Activated naive CD4-positive, alpha-beta T cell treated with anti-CD3 and anti-CD28 coated beads for 36 hours (primary cell): ENCODE measurements at regions of chr1 and their contacts with region 1.

Region 1: GRCh38 chr1:32072622-32073298 is at the start of gene TMEM39B:
- DNase-seq: peak; percentile 95
- H3K4me3 Mint-ChIP-seq: peak within 1 kb of the TSS; percentile 87
- H3K27ac Mint-ChIP-seq: peak within 1 kb of the TSS; percentile 85
- H3K4me1 Mint-ChIP-seq: peaks cover 32% of the 10 kb centered on the region
- H3K27me3 Mint-ChIP-seq: no peaks in the 10 kb centered on the region
- total RNA-seq, gene TMEM39B: 17.2 to 17.6 TPM

Region 2: DNA sequence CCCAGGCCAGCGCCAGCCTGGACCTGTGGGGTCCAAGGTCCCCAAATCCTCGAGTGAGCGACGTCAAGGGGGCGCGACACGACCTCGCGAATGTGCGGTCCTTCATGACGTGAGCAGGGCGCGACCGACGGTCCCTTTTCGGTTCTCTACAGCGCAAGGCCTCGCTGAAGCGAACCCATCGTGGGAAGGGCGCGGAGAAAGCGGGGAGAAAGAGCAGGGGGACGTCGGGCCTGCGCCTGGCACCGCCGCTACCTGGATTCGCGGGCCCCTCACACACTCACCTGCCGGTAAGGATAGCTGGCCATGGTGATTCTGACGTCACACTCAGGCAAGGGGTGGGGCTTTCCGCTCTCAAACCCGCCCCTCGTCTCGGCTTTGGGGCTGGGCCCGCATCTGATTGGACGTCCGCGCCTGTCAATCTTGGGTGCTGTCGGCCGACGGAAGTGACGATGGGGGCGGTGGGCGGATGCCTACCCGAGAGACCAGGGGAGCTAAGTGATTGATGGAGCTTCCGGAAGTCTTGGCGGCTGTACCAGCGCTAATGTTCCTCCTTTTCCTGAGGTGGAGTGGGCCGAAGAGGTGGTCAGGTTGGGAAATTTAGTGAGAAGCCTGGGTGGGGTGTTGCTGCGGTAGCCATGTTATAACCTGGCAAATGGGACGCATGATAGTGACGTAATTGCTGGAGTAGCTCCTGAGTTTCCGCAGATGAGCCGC is 428.0 kb before region 1 on chr1 and contains the start of gene PEF1:
- CTCF ChIA-PET with region 1: no interaction called
- intact Hi-C with region 1: loop called (anchors 10 kb)
- DNase-seq: peak; percentile 100
- H3K4me3 Mint-ChIP-seq: peak within 1 kb of the TSS; percentile 97
- H3K27ac Mint-ChIP-seq: peak within 1 kb of the TSS; percentile 100
- H3K4me1 Mint-ChIP-seq: peaks cover 17% of the 10 kb centered on the region
- H3K27me3 Mint-ChIP-seq: no peaks in the 10 kb centered on the region
- total RNA-seq, gene PEF1: 79.6 to 80.6 TPM

Region 3: DNA sequence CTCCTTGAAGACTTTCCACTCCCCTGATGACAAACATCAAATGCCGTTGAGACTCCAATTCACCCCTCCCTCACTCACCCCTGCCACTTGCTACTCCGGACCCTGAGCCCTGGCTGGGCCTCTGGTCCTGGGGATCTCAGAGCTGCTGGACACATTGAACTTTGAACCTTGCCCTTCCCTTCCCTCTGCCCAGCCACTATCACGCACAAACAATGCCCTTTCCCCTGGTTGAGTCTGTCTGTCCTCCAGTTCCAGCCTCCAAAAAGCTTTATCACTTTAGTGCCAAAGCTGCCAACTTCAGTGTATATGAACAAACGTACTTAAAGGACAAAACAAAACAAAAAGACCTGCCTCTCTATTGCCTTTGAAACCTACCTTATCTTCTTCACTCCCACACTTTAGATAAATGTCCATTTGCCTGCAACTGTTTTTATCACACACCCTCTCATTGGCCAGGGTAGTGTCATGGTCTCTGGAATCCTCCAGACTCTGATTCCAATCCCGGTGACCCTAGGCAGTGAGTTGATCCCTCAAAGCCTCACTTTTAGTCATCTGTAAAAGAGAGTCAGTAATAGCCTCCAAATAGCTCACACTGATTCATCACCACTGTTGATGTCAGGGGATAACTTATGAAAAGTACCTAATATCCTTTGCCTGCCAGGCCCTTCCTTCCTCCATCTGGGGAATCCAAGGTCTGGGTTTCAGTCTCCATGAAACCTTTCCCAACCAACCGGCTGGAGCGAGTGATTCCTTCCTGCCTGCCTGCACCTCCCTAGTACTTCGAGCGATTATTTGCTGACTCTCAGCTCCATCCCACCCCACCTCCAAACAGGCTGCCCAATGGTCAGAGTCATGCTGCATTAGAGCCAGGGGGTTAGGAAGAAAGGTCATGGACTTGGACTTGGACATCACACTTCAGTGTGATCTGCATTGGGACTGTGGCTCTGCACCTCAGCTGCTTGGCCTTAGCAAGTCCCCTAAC is 241.1 kb before region 1 on chr1:
- CTCF ChIA-PET with region 1: no interaction called
- intact Hi-C with region 1: no loop called
- DNase-seq: no peak
- H3K4me3 Mint-ChIP-seq: no peak overlapping the region
- H3K27ac Mint-ChIP-seq: no peak overlapping the region
- H3K4me1 Mint-ChIP-seq: peaks cover 23% of the 10 kb centered on the region
- H3K27me3 Mint-ChIP-seq: no peaks in the 10 kb centered on the region

Region 4: GRCh38 chr1:31984419-31985347 is 88.1 kb before region 1 on chr1:
- CTCF ChIA-PET with region 1: interaction called, 3 read pairs
- intact Hi-C with region 1: loop called (anchors 2 kb)
- DNase-seq: peak; percentile 65
- H3K4me3 Mint-ChIP-seq: peak overlapping the region; percentile 44
- H3K27ac Mint-ChIP-seq: peak overlapping the region; percentile 92
- H3K4me1 Mint-ChIP-seq: peaks cover 52% of the 10 kb centered on the region
- H3K27me3 Mint-ChIP-seq: no peaks in the 10 kb centered on the region

Region 5: DNA sequence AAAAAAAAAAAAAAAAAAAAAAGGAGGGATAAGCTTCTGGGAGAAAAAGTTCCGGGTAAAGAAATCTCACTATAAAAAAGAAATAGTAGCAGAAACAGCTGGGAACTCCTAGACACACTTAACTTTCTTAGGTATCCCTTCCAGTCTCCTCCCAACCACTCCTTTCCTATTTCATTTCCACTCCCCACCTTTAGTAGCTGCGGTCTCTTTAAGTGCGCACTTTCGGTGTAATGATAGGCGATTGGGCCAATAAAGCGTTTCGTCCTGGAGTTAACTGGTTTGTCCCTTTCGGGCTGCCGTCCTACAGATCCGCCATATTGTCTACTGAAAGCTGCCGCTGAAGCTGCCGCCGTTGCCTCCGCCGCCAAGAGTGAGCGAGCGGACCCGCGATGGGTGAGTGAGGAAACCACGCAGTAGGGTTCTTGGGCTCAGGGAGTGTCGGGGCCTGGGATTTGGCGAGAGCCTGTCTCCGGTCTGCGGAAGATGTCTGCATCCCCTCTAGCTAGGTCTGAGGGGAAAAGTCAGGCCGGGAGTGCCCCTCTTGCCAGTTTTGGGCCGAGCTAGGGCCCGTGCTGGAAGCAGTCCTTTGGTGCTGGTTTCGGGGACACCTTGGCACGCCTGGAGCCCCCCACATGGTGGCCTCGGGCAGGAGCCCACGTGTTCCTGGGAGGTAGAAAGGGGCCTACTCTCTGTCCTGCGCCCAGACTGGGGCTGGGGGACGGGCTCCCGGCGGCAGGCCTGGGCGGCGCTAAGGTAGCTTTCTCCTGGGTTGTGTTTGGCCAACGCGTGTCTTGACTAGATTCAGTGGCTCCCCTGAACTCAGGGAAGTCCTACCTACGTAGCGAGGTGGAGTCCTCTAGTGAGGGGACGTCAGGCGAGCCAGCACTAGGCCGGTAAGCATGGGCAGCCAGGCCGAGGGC is 35.2 kb after region 1 on chr1 and contains the start of gene KPNA6:
- CTCF ChIA-PET with region 1: interaction called, 12 read pairs
- intact Hi-C with region 1: loop called (anchors 1 kb)
- DNase-seq: peak; percentile 97
- H3K4me3 Mint-ChIP-seq: peak within 1 kb of the TSS; percentile 99
- H3K27ac Mint-ChIP-seq: peak within 1 kb of the TSS; percentile 94
- H3K4me1 Mint-ChIP-seq: peaks cover 42% of the 10 kb centered on the region
- H3K27me3 Mint-ChIP-seq: no peaks in the 10 kb centered on the region
- total RNA-seq, gene KPNA6: 74.5 to 75.0 TPM

Region 6: DNA sequence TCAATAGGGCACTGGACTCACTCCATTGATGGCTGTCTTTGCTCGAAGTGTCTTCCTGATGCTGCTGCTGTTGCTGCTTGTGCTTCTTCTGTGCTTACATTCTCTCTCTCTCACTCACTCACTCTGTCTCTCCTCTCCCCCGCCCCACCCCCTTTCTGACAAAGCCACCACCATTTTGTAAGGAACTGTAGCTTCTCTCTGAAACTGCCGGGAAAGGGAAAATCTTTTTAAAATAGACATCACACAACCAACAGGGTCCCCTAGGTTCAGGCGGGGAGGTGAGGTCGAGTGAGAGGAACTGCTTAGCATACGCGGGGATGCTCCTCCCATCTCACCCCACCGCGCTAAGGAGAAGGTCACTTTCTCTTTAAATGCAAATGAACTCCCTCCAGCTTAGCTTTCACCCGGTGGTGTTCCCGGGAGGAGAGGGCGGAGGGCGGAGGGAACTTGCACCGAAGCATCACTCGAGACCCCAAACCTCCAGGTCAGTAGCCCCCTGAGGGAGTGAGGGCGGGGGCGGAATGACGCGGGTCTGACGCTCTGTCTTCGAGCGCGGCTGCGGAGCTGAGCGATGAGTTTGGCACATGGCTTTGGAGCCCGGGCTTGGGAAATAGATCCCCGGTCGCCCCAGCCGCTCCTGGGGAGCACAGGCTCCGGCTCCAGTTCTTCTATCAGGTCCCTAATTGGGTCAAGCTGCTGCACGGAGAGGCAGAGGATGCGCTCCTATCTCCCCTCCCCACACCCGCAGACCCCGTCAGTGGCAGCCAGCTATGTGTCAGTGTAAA is 127.7 kb after region 1 on chr1 and contains the start of gene CCDC28B:
- CTCF ChIA-PET with region 1: no interaction called
- intact Hi-C with region 1: loop called (anchors 1 kb)
- DNase-seq: peak; percentile 72
- H3K4me3 Mint-ChIP-seq: peak within 1 kb of the TSS; percentile 70
- H3K27ac Mint-ChIP-seq: peak within 1 kb of the TSS; percentile 88
- H3K4me1 Mint-ChIP-seq: peaks cover 38% of the 10 kb centered on the region
- H3K27me3 Mint-ChIP-seq: no peaks in the 10 kb centered on the region
- total RNA-seq, gene CCDC28B: 13.1 to 14.8 TPM

Region 7: DNA sequence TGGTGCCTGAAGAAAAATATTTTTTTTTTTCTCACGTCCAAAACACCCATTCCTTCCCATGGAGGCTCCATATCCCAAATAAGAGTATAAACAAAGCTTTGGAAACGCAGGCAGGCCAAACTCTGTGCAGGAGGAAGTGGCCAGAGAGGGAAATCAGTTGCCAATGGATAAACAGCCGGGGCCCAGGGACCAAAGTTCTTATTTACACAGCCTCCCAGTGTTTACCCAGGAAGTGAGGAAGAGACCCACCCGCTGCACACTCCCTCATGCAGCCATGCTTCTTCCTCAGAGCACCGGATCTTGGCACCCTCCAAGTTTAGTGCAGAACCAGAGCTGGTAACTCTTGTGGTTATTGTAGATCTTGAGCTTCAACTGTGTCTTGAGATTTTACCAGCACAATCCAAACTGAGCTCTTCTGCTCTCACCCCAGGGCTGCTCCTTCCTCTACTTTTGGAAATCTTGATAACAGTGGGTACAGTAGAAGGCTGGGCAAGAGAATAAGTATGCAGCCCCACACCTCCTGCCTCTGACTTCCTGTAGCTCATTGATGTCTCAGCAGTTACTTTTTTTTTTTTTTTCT is 249.0 kb after region 1 on chr1:
- CTCF ChIA-PET with region 1: no interaction called
- intact Hi-C with region 1: no loop called
- DNase-seq: peak; percentile 42
- H3K4me3 Mint-ChIP-seq: no peak overlapping the region
- H3K27ac Mint-ChIP-seq: peak overlapping the region; percentile 91
- H3K4me1 Mint-ChIP-seq: peaks cover 41% of the 10 kb centered on the region
- H3K27me3 Mint-ChIP-seq: no peaks in the 10 kb centered on the region

Region 8: GRCh38 chr1:32351399-32352238 is 278.9 kb after region 1 on chr1:
- CTCF ChIA-PET with region 1: no interaction called
- intact Hi-C with region 1: loop called (anchors 2 kb)
- DNase-seq: peak; percentile 95
- H3K4me3 Mint-ChIP-seq: peak overlapping the region; percentile 83
- H3K27ac Mint-ChIP-seq: peak overlapping the region; percentile 76
- H3K4me1 Mint-ChIP-seq: peaks cover 31% of the 10 kb centered on the region
- H3K27me3 Mint-ChIP-seq: no peaks in the 10 kb centered on the region